Heart left ventricle (tissue), 16 donors: ENCODE measurements at regions of chr3 and their contacts with region 1.

Region 1: GRCh38 chr3:188954590-188955208 is 217.1 kb upstream of the TPRG1 start:
- DNase-seq: peak; percentile 87 to 90 (median 87)
- ATAC-seq: peak; percentile 68 to 86 (median 85)
- H3K4me3 ChIP-seq: no peak overlapping the region
- H3K27ac ChIP-seq: peak overlapping the region in 4 of 12 donors; percentile 13 to 34 (median 26)
- H3K4me1 ChIP-seq: peaks cover 0 to 46% (median 13%) of the 10 kb centered on the region in 12 donors
- H3K27me3 ChIP-seq: no peaks in the 10 kb centered on the region
- CTCF ChIP-seq: peak; percentile 89 to 99 (median 94)
- POLR2A ChIP-seq: no peak

Region 2: GRCh38 chr3:187738331-187739093 is 1216.2 kb before region 1 on chr3:
- intact Hi-C with region 1: loop called (anchors 1 to 5 kb)
- DNase-seq: peak; percentile 75 to 95 (median 93)
- ATAC-seq: peak; percentile 65 to 78 (median 72)
- H3K4me3 ChIP-seq: peak overlapping the region; percentile 15 to 89 (median 72)
- H3K27ac ChIP-seq: peak overlapping the region; percentile 94 to 100 (median 98)
- H3K4me1 ChIP-seq: peaks cover 0 to 58% (median 36%) of the 10 kb centered on the region in 12 donors
- H3K27me3 ChIP-seq: no peaks in the 10 kb centered on the region
- CTCF ChIP-seq: peak; percentile 50 to 88 (median 74)
- POLR2A ChIP-seq: peak in 1 of 2 donors; percentile 45

Region 3: DNA sequence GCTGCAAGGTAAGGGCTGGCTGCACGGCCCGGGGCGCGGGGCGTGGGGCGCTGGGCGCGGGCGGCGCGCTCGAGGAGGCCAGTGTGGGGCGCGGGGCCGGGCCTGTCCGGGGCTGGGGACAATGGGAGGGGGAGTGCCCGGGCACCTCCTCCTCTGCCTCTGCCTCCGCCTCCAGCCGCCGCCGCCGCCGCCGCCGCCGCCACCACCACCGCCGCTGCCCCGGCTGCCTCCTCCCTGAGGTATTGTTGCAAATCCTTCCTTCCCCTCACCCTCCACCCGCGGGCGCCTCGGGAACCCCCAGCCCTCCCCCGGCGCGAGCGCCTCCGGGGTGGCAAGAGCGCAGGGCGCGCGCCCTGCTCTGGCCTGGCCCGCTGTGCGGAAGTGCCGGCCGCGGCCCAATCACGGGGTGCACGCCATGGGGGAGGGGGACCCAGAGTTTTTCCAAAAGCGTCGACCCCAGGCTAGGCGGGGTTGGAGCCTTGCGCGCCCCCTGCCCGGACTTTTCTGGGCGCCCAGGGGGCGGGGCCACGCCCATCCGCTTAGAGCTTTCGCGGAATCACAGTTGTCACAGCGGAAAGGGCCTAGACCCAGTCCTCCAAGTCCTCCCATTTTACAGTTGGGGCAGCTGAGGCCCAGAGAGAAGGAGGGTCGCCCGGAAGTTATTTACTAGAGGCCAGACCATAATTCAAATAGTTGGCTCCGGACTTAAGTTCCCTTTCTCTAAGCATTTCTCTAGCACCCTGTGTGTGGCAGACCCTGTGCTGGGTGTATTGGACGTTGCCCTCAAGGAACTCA is 800.5 kb before region 1 on chr3 and contains the start of gene LPP:
- intact Hi-C with region 1: loop called in 6 of 10 experiments (anchors 2 to 10 kb)
- DNase-seq: peak; percentile 83 to 92 (median 86)
- ATAC-seq: peak; percentile 67 to 93 (median 82)
- H3K4me3 ChIP-seq: peak within 1 kb of the TSS; percentile 68 to 94 (median 86)
- H3K27ac ChIP-seq: peak within 1 kb of the TSS; percentile 90 to 99 (median 97)
- H3K4me1 ChIP-seq: peaks cover 0 to 62% (median 41%) of the 10 kb centered on the region in 12 donors
- H3K27me3 ChIP-seq: no peaks in the 10 kb centered on the region
- CTCF ChIP-seq: peak in 2 of 12 donors; percentile 7 to 25
- POLR2A ChIP-seq: no peak
- total RNA-seq, gene LPP: 76.6 to 178 (median 111) TPM

Region 4: GRCh38 chr3:188348435-188349244 is 606.1 kb before region 1 on chr3:
- intact Hi-C with region 1: loop called in 3 of 10 experiments (anchors 5 to 10 kb)
- DNase-seq: peak; percentile 66 to 91 (median 84)
- ATAC-seq: peak; percentile 67 to 77 (median 74)
- H3K4me3 ChIP-seq: no peak overlapping the region
- H3K27ac ChIP-seq: peak overlapping the region; percentile 41 to 77 (median 64)
- H3K4me1 ChIP-seq: peaks cover 6 to 65% (median 41%) of the 10 kb centered on the region in 12 donors
- H3K27me3 ChIP-seq: no peaks in the 10 kb centered on the region
- CTCF ChIP-seq: no peak
- POLR2A ChIP-seq: no peak

Region 5: DNA sequence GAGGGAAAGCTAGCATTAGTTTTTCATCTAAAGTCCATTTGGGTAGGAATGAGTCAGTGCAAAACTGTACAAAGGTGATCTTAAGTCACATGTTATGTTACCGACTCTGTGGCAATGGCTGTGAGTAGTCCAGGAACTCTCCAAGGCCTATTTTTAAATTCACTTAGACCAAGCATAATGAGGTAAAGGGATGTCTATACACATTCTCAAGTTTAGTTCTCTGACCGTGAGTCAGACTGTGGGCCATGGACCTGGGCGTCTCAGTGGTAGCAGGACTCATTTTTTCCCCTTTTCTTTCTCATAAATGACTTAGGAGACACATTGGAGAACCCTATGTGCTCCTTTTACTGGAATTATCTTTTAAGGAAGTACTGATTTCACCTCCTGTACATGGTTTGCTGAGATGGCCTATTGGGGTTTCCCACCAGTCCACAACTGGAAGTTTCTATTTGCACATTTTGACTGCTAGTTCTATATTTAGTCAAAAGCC is 271.6 kb before region 1 on chr3:
- intact Hi-C with region 1: loop called in 1 of 10 experiments (anchors 10 kb)
- DNase-seq: peak in 1 of 5 donors; percentile 51
- ATAC-seq: peak; percentile 80 to 93 (median 90)
- H3K4me3 ChIP-seq: no peak overlapping the region
- H3K27ac ChIP-seq: peak overlapping the region; percentile 17 to 77 (median 68)
- H3K4me1 ChIP-seq: peaks cover 0 to 85% (median 43%) of the 10 kb centered on the region in 12 donors
- H3K27me3 ChIP-seq: no peaks in the 10 kb centered on the region
- CTCF ChIP-seq: no peak
- POLR2A ChIP-seq: no peak

Region 6: DNA sequence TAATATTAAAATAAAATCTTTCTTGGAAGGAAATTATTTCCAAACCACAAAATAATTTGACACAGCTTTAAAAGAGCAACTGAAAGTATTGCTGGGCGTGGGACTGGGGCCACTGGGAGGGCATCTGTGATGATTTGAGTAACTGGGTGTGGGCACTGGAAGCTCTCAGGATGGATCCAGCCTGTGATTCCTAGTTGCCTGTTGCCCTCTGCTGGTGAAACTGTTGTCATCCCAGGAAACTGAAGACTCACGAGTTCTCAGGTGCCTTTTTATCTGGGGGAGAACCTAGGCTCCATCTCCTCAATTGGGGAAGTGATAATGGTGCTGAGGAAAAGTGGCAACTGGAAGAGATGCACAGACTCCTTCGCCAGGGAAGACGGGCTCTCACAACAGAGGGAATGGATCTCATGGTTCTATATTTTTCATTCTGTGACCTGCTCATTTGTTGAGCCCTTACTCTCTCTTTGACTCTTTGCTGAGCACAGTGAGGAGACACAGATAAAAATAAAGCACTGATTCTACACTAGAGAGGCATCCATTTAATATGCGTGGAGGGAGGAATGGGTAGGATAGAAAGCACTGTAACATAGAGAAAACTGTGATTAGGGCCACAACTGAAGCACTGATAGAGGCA is 278.6 kb after region 1 on chr3:
- intact Hi-C with region 1: loop called in 1 of 10 experiments (anchors 10 kb)
- DNase-seq: peak in 4 of 5 donors; percentile 33 to 66 (median 52)
- ATAC-seq: peak; percentile 61 to 88 (median 82)
- H3K4me3 ChIP-seq: no peak overlapping the region
- H3K27ac ChIP-seq: no peak overlapping the region
- H3K4me1 ChIP-seq: peaks cover 0 to 12% (median 0%) of the 10 kb centered on the region in 12 donors
- H3K27me3 ChIP-seq: no peaks in the 10 kb centered on the region
- CTCF ChIP-seq: peak; percentile 45 to 70 (median 57)
- POLR2A ChIP-seq: no peak